Posterior vena cava (tissue), 2 donors: ENCODE measurements at regions of chr14 and their contacts with region 1.

Region 1: DNA sequence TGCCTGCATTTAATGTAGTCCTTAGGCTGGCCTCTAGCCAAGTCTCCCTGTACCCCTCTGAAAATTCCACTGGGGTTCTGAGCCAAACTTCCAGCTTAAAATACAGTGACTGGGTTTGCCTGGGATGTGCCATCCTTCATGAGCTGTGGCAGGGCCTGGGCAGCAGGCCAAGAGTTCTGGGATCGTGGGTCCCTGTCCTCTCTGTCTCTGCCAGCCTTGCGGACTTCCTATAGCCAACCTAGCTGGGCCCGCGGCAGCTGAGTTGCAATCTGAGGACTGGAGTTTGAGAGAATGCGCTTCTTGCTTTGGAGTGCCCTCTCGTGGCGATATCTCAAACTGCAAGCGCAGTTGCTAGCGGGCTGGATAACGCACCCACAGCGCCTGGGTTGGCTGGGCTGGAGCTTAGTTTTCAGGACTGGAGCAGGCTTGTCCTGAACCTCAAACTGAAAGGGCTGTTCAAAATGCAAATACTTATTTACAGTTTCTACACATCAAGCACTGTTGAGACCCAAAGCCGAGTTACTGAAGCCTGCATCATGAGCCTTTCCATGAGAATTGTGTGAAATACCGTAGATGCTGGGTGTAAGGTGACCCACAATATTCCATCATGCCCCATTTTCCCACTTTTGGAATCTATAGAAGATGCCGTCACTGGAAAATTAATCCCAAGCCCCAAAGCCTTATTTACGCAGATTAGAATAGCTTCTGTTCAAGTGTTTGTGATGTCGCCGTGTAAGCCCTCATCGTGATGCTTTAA is 7.3 kb upstream of the IFI27L2 start:
- DNase-seq: peak; percentile 96

Region 2: GRCh38 chr14:94036313-94037050 is 100.3 kb before region 1 on chr14:
- intact Hi-C with region 1: loop called in 1 of 2 experiments (anchors 5 kb)
- DNase-seq: peak; percentile 86

Region 3: DNA sequence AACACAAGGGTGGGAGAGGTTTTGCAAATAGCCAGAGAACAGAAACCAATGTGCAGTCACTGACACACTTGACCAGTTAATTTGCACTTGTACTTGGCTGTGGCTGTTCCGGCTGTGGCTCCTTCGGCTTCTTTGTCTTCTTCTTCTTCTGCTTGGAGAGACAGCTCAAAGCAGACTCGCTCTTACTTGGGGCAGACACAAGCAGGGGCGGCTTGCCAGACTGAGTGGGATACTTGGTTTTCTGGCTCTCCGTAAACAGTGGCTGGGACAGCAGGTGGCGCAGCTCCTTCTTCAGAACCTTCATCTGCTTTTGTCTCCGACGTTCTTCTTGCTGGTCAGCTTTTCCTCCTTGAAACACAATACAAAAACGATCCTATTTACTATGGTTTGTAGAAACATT is 85.6 kb before region 1 on chr14:
- intact Hi-C with region 1: loop called in 1 of 2 experiments (anchors 5 kb)
- DNase-seq: no peak

Region 4: DNA sequence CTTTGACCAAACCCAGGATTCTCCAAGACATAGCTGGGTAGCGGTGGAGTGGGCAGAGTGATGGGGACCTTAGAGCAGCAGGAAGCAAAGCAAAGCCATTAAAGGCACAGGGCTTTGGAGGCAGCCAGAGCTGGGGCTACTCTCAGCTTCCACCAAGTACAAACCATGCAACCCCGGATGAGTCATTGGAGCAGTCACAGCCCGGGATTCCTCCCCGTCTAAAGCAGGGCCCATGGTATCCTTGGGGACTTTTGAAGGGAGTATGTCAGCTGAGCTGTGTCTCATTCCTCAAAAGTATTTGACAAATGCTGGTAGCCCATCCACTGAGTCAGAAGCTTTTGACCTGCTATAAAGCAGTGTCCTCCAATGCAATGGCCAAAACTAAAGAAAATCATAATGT is 35.9 kb before region 1 on chr14:
- intact Hi-C with region 1: no loop called
- DNase-seq: no peak

Region 5: GRCh38 chr14:95287176-95287754 is 1150.5 kb after region 1 on chr14:
- intact Hi-C with region 1: no loop called
- DNase-seq: no peak